Left lung (tissue), 14 donors: ENCODE measurements at regions of chr11 and their contacts with region 1.

Region 1: DNA sequence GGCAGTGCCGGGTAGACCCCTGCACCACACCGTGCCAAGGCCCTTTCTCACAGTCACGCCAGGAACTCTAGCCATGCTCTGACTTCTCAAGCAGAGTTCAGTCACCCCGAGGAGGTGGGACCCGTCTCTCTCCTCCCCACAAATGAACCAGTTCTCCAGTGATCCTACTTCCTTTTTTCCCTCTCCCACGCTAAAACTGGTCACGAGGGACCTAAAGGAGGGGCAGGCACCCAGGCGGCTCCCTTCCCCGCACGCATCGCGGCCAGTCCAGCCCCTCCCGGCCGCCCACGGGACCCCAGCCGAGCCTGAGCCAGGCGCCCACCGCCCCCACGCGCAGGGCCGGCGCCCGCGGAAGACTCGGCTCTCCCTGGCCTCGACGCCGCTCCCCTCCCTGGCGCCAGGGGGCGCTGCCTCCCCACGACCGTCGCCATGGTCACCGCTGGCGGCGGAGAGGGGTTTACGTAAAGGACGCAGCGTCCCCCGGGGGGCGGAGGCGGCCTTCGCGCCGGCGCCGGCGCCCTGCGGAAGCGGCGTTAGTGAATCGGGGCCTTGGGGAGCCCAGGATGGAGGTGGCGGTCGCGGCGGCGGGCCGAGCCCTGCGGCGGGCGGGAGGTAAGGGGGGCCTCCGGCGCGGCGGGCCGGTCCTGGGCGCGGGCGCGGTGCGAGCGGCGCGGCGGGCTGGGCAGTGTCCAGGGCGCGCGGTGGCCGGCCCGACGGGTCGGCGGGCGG is at the start of gene DAGLA:
- DNase-seq: peak; percentile 68 to 95 (median 78)
- ATAC-seq: peak; percentile 90
- H3K4me3 ChIP-seq: peak within 1 kb of the TSS; percentile 34 to 48
- H3K27ac ChIP-seq: peak within 1 kb of the TSS in 1 of 2 donors; percentile 55
- H3K4me1 ChIP-seq: peaks cover 8 to 25% of the 10 kb centered on the region in 2 donors
- H3K27me3 ChIP-seq: peaks cover 0 to 54% of the 10 kb centered on the region in 2 donors
- CTCF ChIP-seq: peak; percentile 91 to 97
- polyA plus RNA-seq, gene DAGLA: 2.2 to 4.3 (median 3.3) TPM

Region 2: DNA sequence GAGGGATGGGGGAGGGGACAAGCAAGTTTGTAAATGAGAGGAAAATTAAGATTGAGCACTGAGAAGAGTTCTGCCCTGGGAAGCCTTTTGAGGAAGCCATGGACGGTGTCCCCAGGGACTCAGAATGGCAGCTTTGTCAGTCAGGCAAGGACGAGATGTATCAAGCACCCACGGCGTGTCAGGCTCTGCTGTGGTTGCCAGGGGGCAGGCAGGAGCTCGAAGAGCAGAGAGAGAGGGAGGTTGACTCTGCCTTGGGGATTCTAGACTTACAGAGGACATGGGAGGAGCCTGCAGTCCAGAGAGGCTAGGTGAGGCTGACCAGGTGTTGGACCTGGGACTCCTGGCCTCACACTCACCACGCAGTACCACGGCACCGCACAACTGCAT is 70.1 kb before region 1 on chr11:
- intact Hi-C with region 1: no loop called
- DNase-seq: no peak
- ATAC-seq: peak; percentile 58
- H3K4me3 ChIP-seq: no peak overlapping the region
- H3K27ac ChIP-seq: no peak overlapping the region
- H3K4me1 ChIP-seq: no peaks in the 10 kb centered on the region
- H3K27me3 ChIP-seq: peaks cover 0 to 18% of the 10 kb centered on the region in 2 donors
- CTCF ChIP-seq: no peak

Region 3: GRCh38 chr11:61733120-61733978 is 53.3 kb after region 1 on chr11:
- intact Hi-C with region 1: loop called in 1 of 2 experiments (anchors 5 kb)
- DNase-seq: peak; percentile 73 to 96 (median 90)
- ATAC-seq: peak; percentile 84
- H3K4me3 ChIP-seq: no peak overlapping the region
- H3K27ac ChIP-seq: no peak overlapping the region
- H3K4me1 ChIP-seq: peaks cover 4% of the 10 kb centered on the region in 2 donors
- H3K27me3 ChIP-seq: no peaks in the 10 kb centered on the region
- CTCF ChIP-seq: peak; percentile 98 to 100